Activated CD4-positive, alpha-beta memory T cell treated with anti-CD3 and anti-CD28 coated beads for 36 hours (primary cell): ENCODE measurements at regions of chr2 and their contacts with region 1.

Region 1: GRCh38 chr2:161166538-161167409 is 6.5 kb downstream of the TANK start:
- DNase-seq: peak; percentile 87
- H3K4me3 Mint-ChIP-seq: peak overlapping the region; percentile 34
- H3K27ac Mint-ChIP-seq: peak overlapping the region; percentile 91
- H3K4me1 Mint-ChIP-seq: peaks cover 84% of the 10 kb centered on the region
- H3K27me3 Mint-ChIP-seq: no peaks in the 10 kb centered on the region

Region 2: DNA sequence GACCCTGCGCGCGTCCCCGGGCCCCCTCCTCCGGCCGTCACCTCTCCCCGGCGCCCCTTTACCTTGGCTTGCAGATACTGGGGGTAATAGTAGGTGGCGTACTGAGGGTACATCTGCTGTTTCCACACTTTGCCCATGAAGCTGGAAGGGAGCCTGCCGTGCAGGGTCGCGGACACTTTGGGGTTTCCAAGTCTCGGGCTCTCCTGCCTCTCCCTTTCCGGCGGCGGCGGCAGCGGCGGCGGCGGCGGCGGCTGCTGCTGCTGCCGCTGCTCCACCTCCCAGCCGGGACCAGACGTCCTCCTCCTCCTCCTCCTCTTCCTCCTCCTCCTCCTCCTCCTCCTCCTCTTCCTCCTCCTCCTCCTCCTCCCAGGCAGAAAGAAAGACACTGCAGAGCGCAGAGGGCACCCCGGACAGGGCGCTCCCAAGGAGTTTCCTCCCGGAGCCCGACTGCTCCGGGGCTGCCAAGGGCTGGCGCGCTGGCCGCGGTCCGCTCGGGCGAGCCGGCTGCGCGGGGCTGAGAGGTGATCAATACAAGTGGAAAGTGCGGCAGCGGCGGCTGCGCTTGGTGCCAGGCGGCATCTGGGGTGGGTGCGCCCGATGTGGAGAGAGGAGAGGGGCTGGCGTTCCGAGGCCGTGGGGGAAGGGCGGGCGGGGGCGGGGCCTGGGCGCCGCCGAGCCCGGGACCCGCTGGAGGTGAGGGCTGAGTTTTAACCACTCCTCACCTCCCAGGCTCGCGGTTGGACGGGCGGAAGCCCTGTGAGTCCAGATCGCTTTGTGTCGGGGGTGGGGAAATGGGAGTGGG is 673.3 kb before region 1 on chr2 and contains the start of gene RBMS1:
- CTCF ChIA-PET with region 1: no interaction called
- POLR2A ChIA-PET with region 1: no interaction called
- intact Hi-C with region 1: loop called (anchors 5 kb)
- DNase-seq: peak; percentile 59
- H3K4me3 Mint-ChIP-seq: peak within 1 kb of the TSS; percentile 95
- H3K27ac Mint-ChIP-seq: peak within 1 kb of the TSS; percentile 93
- H3K4me1 Mint-ChIP-seq: peaks cover 36% of the 10 kb centered on the region
- H3K27me3 Mint-ChIP-seq: no peaks in the 10 kb centered on the region
- total RNA-seq, gene RBMS1: 37.9 to 40.0 TPM

Region 3: GRCh38 chr2:161122772-161123530 is 43.8 kb before region 1 on chr2:
- CTCF ChIA-PET with region 1: no interaction called
- POLR2A ChIA-PET with region 1: no interaction called
- intact Hi-C with region 1: loop called (anchors 1 kb)
- DNase-seq: peak; percentile 62
- H3K4me3 Mint-ChIP-seq: peak overlapping the region; percentile 17
- H3K27ac Mint-ChIP-seq: peak overlapping the region; percentile 58
- H3K4me1 Mint-ChIP-seq: peaks cover 24% of the 10 kb centered on the region
- H3K27me3 Mint-ChIP-seq: no peaks in the 10 kb centered on the region

Region 4: GRCh38 chr2:161208527-161209139 is 41.9 kb after region 1 on chr2:
- CTCF ChIA-PET with region 1: no interaction called
- POLR2A ChIA-PET with region 1: no interaction called
- intact Hi-C with region 1: no loop called
- DNase-seq: no peak
- H3K4me3 Mint-ChIP-seq: no peak overlapping the region
- H3K27ac Mint-ChIP-seq: no peak overlapping the region
- H3K4me1 Mint-ChIP-seq: peaks cover 10% of the 10 kb centered on the region
- H3K27me3 Mint-ChIP-seq: no peaks in the 10 kb centered on the region

Region 5: DNA sequence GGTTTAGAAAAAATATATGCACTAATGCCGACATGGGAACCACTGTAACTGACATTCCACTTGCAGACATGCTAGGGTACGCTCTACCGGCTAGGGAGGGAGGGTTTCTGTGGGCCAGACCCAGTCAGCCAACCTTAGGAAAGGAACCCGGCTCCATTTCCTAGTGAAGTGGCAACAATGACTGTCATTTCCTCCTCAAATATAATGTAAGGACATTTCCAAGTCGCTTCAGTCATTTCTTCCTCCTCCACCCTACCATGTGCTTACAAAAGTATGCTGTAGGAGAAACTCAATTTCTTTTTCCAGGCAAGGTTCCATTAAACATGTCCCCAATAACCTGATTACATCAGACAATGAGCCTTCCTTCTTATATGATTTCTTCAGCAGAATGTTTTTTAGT is 77.1 kb after region 1 on chr2:
- CTCF ChIA-PET with region 1: no interaction called
- POLR2A ChIA-PET with region 1: no interaction called
- intact Hi-C with region 1: loop called (anchors 1 kb)
- DNase-seq: peak; percentile 34
- H3K4me3 Mint-ChIP-seq: peak overlapping the region; percentile 89
- H3K27ac Mint-ChIP-seq: peak overlapping the region; percentile 91
- H3K4me1 Mint-ChIP-seq: peaks cover 54% of the 10 kb centered on the region
- H3K27me3 Mint-ChIP-seq: no peaks in the 10 kb centered on the region